ENCODE measurements at regions of chr14 and their contacts with region 1.

Region 1: GRCh38 chr14:37091651-37092050 is 80.8 kb downstream of the SLC25A21 start:
- DNase-seq: no peak
- H3K4me3 ChIP-seq: no peak overlapping the region
- CTCF ChIP-seq: no peak
- POLR2A ChIP-seq: no peak

Region 2: DNA sequence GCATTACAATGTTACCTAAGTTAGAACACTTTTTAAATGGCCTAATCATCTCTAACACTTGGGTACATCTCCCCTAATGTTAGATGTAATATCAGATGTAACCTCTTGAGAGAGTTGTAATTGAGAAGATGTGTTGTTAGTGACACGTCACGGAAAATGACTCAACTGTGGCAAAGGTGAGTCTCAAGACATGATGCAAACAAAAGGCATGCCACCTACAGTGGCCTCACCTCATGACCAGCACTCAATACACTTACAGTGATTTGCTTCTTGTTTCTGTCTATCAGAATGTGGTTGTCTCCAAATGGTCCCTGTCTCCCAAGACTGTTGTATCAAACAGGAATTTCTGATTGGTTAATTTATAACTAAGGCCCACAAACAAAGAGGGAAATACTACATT is 10.4 kb before region 1 on chr14:
- intact Hi-C with region 1: loop called (anchors 1 kb)
- DNase-seq: no peak
- H3K4me3 ChIP-seq: no peak overlapping the region
- CTCF ChIP-seq: no peak
- POLR2A ChIP-seq: no peak